GM12878 (cell line): ENCODE measurements at regions of chr15 and their contacts with region 1.

Region 1: GRCh38 chr15:67080900-67081431 is 15.6 kb downstream of the SMAD3 start:
- DNase-seq: peak; percentile 99
- ATAC-seq: peak; percentile 58
- H3K4me3 ChIP-seq: peak overlapping the region; percentile 56
- H3K27ac ChIP-seq: peak overlapping the region; percentile 93
- H3K4me1 ChIP-seq: peaks cover 86% of the 10 kb centered on the region
- H3K27me3 ChIP-seq: no peaks in the 10 kb centered on the region
- CTCF ChIP-seq: peak; percentile 44 to 51 (median 49)
- EP300 ChIP-seq: peak; percentile 86 to 93; a peak in 3 of 4 replicates
- POLR2A ChIP-seq: peak; percentile 38; the same call in 1 of the 2 replicates
- RAD21 ChIP-seq: peak; percentile 60

Region 2: DNA sequence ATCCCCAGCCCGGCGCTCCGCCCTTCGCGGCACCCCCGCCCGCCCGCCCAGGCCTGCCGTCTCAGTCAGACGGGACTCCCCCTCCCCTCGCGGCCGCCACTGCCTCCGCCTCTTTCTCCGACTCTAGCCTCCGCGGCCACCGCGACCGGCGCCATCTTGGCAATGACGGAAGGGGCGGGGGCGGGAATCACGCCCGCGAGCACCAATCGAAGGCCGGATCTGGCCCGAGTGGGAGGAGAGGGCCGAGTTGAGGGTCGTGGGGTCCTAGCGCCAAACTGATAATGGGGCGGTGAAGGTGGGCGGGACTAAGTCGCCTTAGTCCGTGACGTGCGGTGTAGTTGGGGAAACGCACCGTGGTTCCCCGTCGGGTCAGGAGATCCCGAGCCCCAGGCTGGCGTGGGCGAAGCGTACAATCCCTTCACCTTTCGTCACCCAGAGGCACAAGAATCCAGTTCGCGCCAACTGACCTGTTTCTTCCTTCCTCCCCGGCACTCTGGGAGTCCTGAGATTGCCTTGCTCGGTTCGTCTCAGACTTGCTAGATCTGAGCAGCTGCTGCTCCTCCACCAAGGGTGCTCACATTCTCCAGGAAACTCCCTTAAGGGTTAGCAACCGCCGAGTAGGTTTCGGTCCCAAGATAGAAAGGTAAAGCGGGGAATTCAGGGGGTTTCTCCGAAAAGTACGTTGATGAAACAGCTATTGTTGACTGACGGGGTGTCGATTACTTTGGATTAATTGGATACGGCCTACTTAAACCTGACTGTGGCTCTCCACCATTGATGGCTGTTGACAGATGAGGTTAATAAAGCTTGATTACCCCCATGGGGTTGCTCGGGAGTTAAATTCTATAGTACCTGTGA is 1288.6 kb before region 1 on chr15 and contains the start of gene DENND4A:
- CTCF ChIA-PET with region 1: no interaction called
- POLR2A ChIA-PET with region 1: no interaction called
- RAD21 ChIA-PET with region 1: no interaction called
- SMC1A ChIA-PET with region 1: no interaction called
- in situ Hi-C with region 1: loop called (anchors 25 kb)
- intact Hi-C with region 1: no loop called
- DNase-seq: peak; percentile 97
- ATAC-seq: peak; percentile 79
- H3K4me3 ChIP-seq: peak within 1 kb of the TSS; percentile 96
- H3K27ac ChIP-seq: peak within 1 kb of the TSS; percentile 99
- H3K4me1 ChIP-seq: peaks cover 18% of the 10 kb centered on the region
- H3K27me3 ChIP-seq: no peaks in the 10 kb centered on the region
- CTCF ChIP-seq: no peak
- EP300 ChIP-seq: peak; percentile 90 to 96
- POLR2A ChIP-seq: peak; percentile 92
- RAD21 ChIP-seq: no peak
- polyA plus RNA-seq, gene DENND4A: 14.2 to 15.4 TPM

Region 3: GRCh38 chr15:66774001-66774814 is 306.8 kb before region 1 on chr15:
- CTCF ChIA-PET with region 1: no interaction called
- POLR2A ChIA-PET with region 1: no interaction called
- RAD21 ChIA-PET with region 1: no interaction called
- SMC1A ChIA-PET with region 1: no interaction called
- in situ Hi-C with region 1: no loop called
- intact Hi-C with region 1: no loop called
- DNase-seq: no peak
- ATAC-seq: peak; percentile 98
- H3K4me3 ChIP-seq: no peak overlapping the region
- H3K27ac ChIP-seq: no peak overlapping the region
- H3K4me1 ChIP-seq: no peaks in the 10 kb centered on the region
- H3K27me3 ChIP-seq: no peaks in the 10 kb centered on the region
- CTCF ChIP-seq: peak; percentile 66 to 87 (median 82)
- EP300 ChIP-seq: no peak
- POLR2A ChIP-seq: no peak
- RAD21 ChIP-seq: peak; percentile 75

Region 4: GRCh38 chr15:67065444-67066093 is 15.4 kb before region 1 on chr15 and contains the start of gene SMAD3:
- CTCF ChIA-PET with region 1: interaction called, 57 read pairs
- POLR2A ChIA-PET with region 1: interaction called, 69 read pairs
- RAD21 ChIA-PET with region 1: interaction called, 215 read pairs
- SMC1A ChIA-PET with region 1: interaction called, 192 read pairs
- in situ Hi-C with region 1: no loop called
- intact Hi-C with region 1: loop called (anchors 1 kb)
- DNase-seq: no peak
- ATAC-seq: peak; percentile 72
- H3K4me3 ChIP-seq: peak within 1 kb of the TSS; percentile 80
- H3K27ac ChIP-seq: peak within 1 kb of the TSS; percentile 78
- H3K4me1 ChIP-seq: peaks cover 25% of the 10 kb centered on the region
- H3K27me3 ChIP-seq: no peaks in the 10 kb centered on the region
- CTCF ChIP-seq: no peak
- EP300 ChIP-seq: no peak
- POLR2A ChIP-seq: peak; percentile 93
- RAD21 ChIP-seq: no peak
- polyA plus RNA-seq, gene SMAD3: 5.6 to 6.6 TPM

Region 5: GRCh38 chr15:67109141-67110034 is 28.4 kb after region 1 on chr15:
- CTCF ChIA-PET with region 1: interaction called, 6 read pairs
- POLR2A ChIA-PET with region 1: interaction called, 79 read pairs
- RAD21 ChIA-PET with region 1: interaction called, 15 read pairs
- SMC1A ChIA-PET with region 1: interaction called, 247 read pairs
- in situ Hi-C with region 1: no loop called
- intact Hi-C with region 1: no loop called
- DNase-seq: no peak
- ATAC-seq: peak; percentile 88
- H3K4me3 ChIP-seq: peak overlapping the region; percentile 23; the same call in 1 of the 2 replicates
- H3K27ac ChIP-seq: peak overlapping the region; percentile 92
- H3K4me1 ChIP-seq: peaks cover 63% of the 10 kb centered on the region
- H3K27me3 ChIP-seq: no peaks in the 10 kb centered on the region
- CTCF ChIP-seq: no peak
- EP300 ChIP-seq: peak; percentile 91 to 93; a peak in 3 of 4 replicates
- POLR2A ChIP-seq: peak; percentile 52
- RAD21 ChIP-seq: peak; percentile 4; the same call in 1 of the 2 replicates

Region 6: DNA sequence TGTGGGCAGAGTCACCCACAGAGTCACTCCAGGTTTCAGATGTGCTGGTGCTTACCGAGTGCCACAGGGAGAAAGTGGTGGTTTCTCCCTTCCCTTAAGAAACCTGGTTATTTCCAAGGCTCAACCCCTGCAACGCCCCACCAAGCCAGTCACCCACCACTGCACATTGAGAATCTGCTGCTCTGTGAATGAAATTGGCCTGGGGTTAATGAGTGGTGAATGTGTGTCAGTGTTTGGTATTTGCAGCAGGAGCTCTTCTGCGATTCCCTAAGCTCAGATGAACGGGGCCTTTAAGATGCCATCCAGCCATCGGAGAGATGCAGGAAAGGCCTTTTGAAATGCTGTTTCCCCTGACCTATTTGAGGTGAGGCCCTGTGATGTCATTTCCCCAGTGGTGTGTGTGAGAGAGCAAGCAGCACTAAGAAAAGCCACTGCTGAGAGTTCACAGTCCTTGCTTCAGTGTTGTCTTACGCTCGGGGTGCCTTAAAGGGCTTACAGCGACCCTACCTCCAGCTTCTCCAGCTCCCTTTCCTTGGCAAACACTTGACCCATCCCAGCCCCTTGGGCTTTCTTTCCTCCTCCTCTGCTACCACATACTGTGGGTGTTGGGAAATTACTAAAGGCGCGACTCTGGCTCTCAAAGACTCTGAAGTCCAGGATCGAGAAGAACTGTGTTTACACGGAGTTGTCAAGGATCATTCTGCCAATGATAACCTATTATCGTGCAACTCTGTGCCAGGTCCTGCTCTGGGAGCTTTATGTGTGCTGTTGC is 53.3 kb after region 1 on chr15:
- CTCF ChIA-PET with region 1: no interaction called
- POLR2A ChIA-PET with region 1: interaction called, 7 read pairs
- RAD21 ChIA-PET with region 1: interaction called, 21 read pairs
- SMC1A ChIA-PET with region 1: interaction called, 27 read pairs
- in situ Hi-C with region 1: no loop called
- intact Hi-C with region 1: loop called (anchors 1 kb)
- DNase-seq: no peak
- ATAC-seq: peak; percentile 89
- H3K4me3 ChIP-seq: peak overlapping the region; percentile 51
- H3K27ac ChIP-seq: peak overlapping the region; percentile 89
- H3K4me1 ChIP-seq: peaks cover 67% of the 10 kb centered on the region
- H3K27me3 ChIP-seq: no peaks in the 10 kb centered on the region
- CTCF ChIP-seq: no peak
- EP300 ChIP-seq: no peak
- POLR2A ChIP-seq: peak; percentile 71
- RAD21 ChIP-seq: no peak

Region 7: GRCh38 chr15:67405208-67406191 is 324.5 kb after region 1 on chr15:
- CTCF ChIA-PET with region 1: no interaction called
- POLR2A ChIA-PET with region 1: no interaction called
- RAD21 ChIA-PET with region 1: no interaction called
- SMC1A ChIA-PET with region 1: no interaction called
- in situ Hi-C with region 1: no loop called
- intact Hi-C with region 1: no loop called
- DNase-seq: no peak
- ATAC-seq: no peak
- H3K4me3 ChIP-seq: no peak overlapping the region
- H3K27ac ChIP-seq: no peak overlapping the region
- H3K4me1 ChIP-seq: no peaks in the 10 kb centered on the region
- H3K27me3 ChIP-seq: no peaks in the 10 kb centered on the region; a peak in 1 of 4 replicates
- CTCF ChIP-seq: no peak
- EP300 ChIP-seq: no peak
- POLR2A ChIP-seq: no peak
- RAD21 ChIP-seq: no peak

Region 8: DNA sequence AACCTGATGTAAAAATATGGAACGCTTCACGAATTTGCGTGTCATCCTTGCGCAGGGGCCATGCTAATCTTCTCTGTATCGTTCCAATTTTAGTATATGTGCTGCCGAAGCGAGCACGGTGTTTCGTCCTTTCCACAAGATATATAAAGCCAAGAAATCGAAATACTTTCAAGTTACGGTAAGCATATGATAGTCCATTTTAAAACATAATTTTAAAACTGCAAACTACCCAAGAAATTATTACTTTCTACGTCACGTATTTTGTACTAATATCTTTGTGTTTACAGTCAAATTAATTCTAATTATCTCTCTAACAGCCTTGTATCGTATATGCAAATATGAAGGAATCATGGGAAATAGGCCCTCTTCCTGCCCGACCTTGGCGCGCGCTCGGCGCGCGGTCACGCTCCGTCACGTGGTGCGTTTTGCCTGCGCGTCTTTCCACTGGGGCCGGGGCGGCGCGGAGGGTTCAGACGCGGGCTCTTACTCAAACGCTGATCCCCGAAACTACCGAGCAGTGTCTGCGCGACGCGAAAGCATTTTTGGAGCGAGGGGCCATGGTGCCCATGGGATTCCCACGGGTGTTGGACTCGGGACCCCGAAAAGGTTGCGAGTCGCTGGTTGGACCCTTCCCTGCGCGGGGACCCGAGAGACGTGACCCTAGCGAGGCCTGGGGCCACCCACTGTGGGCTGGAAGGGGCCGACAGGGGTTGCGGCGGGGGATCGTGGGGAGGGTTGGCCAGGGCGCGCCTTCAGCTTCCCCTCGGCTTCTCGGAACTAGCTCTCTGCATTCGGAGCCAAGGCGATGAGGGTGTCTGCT is 759.2 kb after region 1 on chr15 and contains the start of gene RNU6-1:
- CTCF ChIA-PET with region 1: no interaction called
- POLR2A ChIA-PET with region 1: no interaction called
- RAD21 ChIA-PET with region 1: no interaction called
- SMC1A ChIA-PET with region 1: no interaction called
- in situ Hi-C with region 1: no loop called
- intact Hi-C with region 1: loop called (anchors 10 kb)
- DNase-seq: peak; percentile 88
- ATAC-seq: peak; percentile 86
- H3K4me3 ChIP-seq: peak within 1 kb of the TSS; percentile 85
- H3K27ac ChIP-seq: peak within 1 kb of the TSS; percentile 83
- H3K4me1 ChIP-seq: peaks cover 23% of the 10 kb centered on the region
- H3K27me3 ChIP-seq: peaks cover 8% of the 10 kb centered on the region in 2 experiments; a peak in 3 of 4 replicates
- CTCF ChIP-seq: no peak
- EP300 ChIP-seq: 0 out of 4 replicates have a peak, but pooled peaks have one; percentile 24
- POLR2A ChIP-seq: peak; percentile 94
- RAD21 ChIP-seq: 0 out of 2 replicates have a peak, but pooled peaks have one; percentile 3
- polyA plus RNA-seq, gene RNU6-1: not detected